ENCODE measurements at regions of chr12 and their contacts with region 1.

Region 1: GRCh38 chr12:99043319-99043914 is 398.3 kb downstream of the APAF1 start:
- DNase-seq: peak; percentile 29 to 55 (median 51)
- H3K4me3 ChIP-seq: no peak overlapping the region
- H3K4me3 Mint-ChIP-seq: no peak overlapping the region
- H3K27ac ChIP-seq: no peak overlapping the region
- H3K27ac Mint-ChIP-seq: no peak overlapping the region
- H3K4me1 ChIP-seq: no peaks in the 10 kb centered on the region
- H3K4me1 Mint-ChIP-seq: no peaks in the 10 kb centered on the region
- H3K27me3 ChIP-seq: no peaks in the 10 kb centered on the region
- H3K27me3 Mint-ChIP-seq: peaks cover 2 to 9% (median 7%) of the 10 kb centered on the region in 3 donors
- CTCF ChIP-seq: peak; percentile 88

Region 2: GRCh38 chr12:99170037-99170436 is 126.6 kb after region 1 on chr12:
- intact Hi-C with region 1: loop called in 1 of 2 experiments (anchors 5 kb)
- DNase-seq: no peak
- H3K4me3 ChIP-seq: no peak overlapping the region
- H3K4me3 Mint-ChIP-seq: no peak overlapping the region
- H3K27ac ChIP-seq: no peak overlapping the region
- H3K27ac Mint-ChIP-seq: no peak overlapping the region
- H3K4me1 ChIP-seq: no peaks in the 10 kb centered on the region
- H3K4me1 Mint-ChIP-seq: no peaks in the 10 kb centered on the region
- H3K27me3 ChIP-seq: no peaks in the 10 kb centered on the region
- H3K27me3 Mint-ChIP-seq: peaks cover 0 to 6% (median 4%) of the 10 kb centered on the region in 3 donors
- CTCF ChIP-seq: no peak

Region 3: DNA sequence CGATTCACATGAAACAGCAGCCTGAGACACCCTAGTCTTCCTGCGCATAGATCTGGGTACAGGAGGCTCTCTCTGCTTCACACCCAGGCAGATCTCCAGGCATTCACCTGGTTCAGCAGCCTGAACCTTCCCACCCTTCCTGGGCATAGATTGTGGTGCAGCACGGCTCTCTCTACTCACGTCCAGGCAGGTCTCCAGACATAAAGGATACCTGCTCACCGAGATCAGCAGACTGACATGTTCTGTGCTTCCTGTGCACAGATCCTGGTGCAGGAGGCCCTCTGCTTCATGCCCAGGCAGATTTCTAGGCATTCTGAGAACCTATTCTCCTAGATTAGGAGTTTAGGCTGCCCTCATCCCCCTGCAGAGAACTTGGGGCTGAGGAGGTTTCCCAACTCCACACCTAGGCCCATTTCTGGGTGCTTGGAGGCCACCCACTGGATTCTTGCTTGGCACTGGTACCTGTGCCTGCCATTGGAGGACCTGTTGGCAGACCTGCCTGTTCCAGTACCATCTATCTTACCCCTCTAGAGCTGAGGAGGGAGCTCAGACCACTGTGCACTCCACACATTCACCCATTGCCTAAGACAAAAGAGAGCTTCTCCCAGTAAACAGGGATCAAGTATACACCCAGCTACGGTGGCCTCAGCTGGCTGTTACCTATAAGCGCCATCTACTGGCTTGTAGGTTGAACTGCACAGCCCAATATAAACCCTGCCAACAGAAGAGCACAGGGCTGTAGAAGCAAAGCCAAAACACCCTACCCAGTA is 576.2 kb after region 1 on chr12:
- intact Hi-C with region 1: loop called (anchors 5 kb)
- DNase-seq: peak in 2 of 3 donors; percentile 2 to 7
- H3K4me3 ChIP-seq: no peak overlapping the region
- H3K4me3 Mint-ChIP-seq: no peak overlapping the region
- H3K27ac ChIP-seq: no peak overlapping the region
- H3K27ac Mint-ChIP-seq: no peak overlapping the region
- H3K4me1 ChIP-seq: no peaks in the 10 kb centered on the region
- H3K4me1 Mint-ChIP-seq: no peaks in the 10 kb centered on the region
- H3K27me3 ChIP-seq: no peaks in the 10 kb centered on the region
- H3K27me3 Mint-ChIP-seq: no peaks in the 10 kb centered on the region
- CTCF ChIP-seq: peak; percentile 70